ENCODE measurements at regions of chr11 and their contacts with region 1.

Region 1: GRCh38 chr11:65117216-65118096 is at the start of gene ZNHIT2:
- DNase-seq: peak; percentile 100
- H3K4me3 ChIP-seq: peak within 1 kb of the TSS; percentile 70
- H3K27ac ChIP-seq: peak within 1 kb of the TSS; percentile 71
- H3K4me1 ChIP-seq: peaks cover 23% of the 10 kb centered on the region
- H3K27me3 ChIP-seq: no peaks in the 10 kb centered on the region
- CTCF ChIP-seq: peak; percentile 71
- total RNA-seq, gene ZNHIT2: 8.1 to 17.3 TPM

Region 2: GRCh38 chr11:65013692-65014145 is 103.7 kb before region 1 on chr11:
- intact Hi-C with region 1: loop called (anchors 5 kb)
- DNase-seq: peak; percentile 91
- H3K4me3 ChIP-seq: peak overlapping the region; percentile 72
- H3K27ac ChIP-seq: peak overlapping the region; percentile 99
- H3K4me1 ChIP-seq: peaks cover 5% of the 10 kb centered on the region
- H3K27me3 ChIP-seq: no peaks in the 10 kb centered on the region
- CTCF ChIP-seq: peak; percentile 13

Region 3: DNA sequence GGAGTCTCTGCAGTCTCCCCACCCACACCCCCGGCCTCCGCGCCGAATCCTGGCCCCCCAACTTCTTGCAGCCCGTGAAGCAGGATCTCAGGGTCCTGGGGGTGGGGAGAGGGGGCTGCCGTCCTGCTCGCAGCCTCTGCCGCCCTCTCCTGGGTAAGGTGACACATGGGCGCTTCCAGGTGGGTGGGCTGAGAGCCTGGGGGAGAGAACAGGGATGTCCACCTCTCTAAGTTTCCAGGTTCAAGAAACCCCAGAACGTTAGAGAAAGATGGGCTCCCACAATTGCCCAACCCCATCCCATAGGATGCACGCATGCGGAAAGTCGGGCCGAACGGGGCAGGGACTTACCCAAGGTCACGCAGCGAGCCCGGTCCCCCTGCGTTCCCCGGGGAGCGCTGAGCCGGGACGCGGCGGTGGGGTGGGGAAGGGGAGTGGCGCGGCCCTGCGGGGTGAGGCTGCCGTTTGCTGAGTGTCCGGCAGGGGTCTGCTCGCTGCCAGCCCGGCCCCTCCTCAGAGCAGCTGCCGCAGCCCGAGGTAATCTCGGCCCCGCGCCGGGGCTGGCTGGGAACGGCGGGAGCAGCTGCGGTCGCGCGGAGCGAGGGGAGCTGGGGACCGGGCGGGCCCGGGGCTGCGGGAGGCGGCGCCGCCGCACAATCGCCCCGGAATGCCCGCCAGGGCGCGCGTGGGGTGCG is 63.6 kb after region 1 on chr11:
- intact Hi-C with region 1: loop called (anchors 5 kb)
- DNase-seq: peak; percentile 64
- H3K4me3 ChIP-seq: peak overlapping the region; percentile 94
- H3K27ac ChIP-seq: peak overlapping the region; percentile 97
- H3K4me1 ChIP-seq: peaks cover 12% of the 10 kb centered on the region
- H3K27me3 ChIP-seq: no peaks in the 10 kb centered on the region
- CTCF ChIP-seq: no peak

Region 4: DNA sequence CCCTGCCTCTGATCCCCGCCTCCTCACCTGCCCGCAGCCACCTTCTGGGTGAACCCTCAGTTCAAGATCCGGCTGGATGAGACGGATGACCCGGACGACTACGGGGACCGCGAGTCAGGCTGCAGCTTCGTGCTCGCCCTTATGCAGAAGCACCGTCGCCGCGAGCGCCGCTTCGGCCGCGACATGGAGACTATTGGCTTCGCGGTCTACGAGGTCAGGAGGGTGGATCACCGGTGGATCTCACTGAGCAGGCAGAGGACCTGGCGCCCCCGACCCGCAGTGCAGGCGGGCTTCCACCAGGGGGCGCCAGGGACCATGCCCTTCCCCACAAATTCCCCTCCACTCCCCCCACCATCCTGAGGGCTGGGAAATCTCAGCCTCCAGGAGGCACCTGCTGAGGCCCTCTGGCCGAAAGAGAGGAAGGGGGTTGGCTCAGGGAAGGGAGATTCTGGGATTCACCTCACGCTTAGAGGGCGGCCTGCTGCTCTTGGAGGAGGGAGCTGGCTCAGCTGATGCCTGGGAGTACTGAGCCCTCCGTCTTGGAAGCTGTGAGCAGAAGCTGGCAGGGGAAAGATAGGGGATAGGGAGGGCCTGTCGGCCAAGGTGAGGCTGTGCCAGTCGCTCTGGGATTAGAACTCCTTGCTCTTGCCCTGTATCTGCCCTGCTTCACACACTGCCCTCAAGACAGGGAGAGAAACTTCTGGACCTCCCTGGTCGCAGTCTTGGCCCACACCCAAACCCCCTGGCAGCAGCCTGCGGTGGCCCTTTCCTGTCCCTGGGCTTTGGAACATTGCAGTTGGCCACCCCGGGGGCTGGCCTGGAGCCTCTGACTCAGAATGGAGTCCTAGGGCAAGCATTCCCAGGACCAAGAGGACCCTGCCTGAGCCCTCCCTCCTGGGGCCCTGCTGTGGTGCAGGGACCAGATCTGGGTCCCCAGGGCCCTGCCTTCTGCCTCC is 87.5 kb after region 1 on chr11:
- intact Hi-C with region 1: no loop called
- DNase-seq: no peak
- H3K4me3 ChIP-seq: no peak overlapping the region
- H3K27ac ChIP-seq: no peak overlapping the region
- H3K4me1 ChIP-seq: peaks cover 14% of the 10 kb centered on the region
- H3K27me3 ChIP-seq: no peaks in the 10 kb centered on the region
- CTCF ChIP-seq: peak; percentile 83

Region 5: GRCh38 chr11:65225279-65226102 is 108.0 kb after region 1 on chr11:
- intact Hi-C with region 1: no loop called
- DNase-seq: peak; percentile 58
- H3K4me3 ChIP-seq: peak overlapping the region; percentile 31
- H3K27ac ChIP-seq: no peak overlapping the region
- H3K4me1 ChIP-seq: peaks cover 7% of the 10 kb centered on the region
- H3K27me3 ChIP-seq: no peaks in the 10 kb centered on the region
- CTCF ChIP-seq: no peak

Region 6: GRCh38 chr11:65251476-65251875 is 134.0 kb after region 1 on chr11:
- intact Hi-C with region 1: loop called (anchors 10 kb)
- DNase-seq: no peak
- H3K4me3 ChIP-seq: no peak overlapping the region
- H3K27ac ChIP-seq: no peak overlapping the region
- H3K4me1 ChIP-seq: no peaks in the 10 kb centered on the region
- H3K27me3 ChIP-seq: no peaks in the 10 kb centered on the region
- CTCF ChIP-seq: no peak